IMR-90 (cell line): ENCODE measurements at regions of chr7 and their contacts with region 1.

Region 1: GRCh38 chr7:117323851-117324701 is 1.2 kb upstream of the WNT2 start:
- DNase-seq: peak; percentile 70
- ATAC-seq: peak; percentile 82
- H3K4me3 ChIP-seq: peak overlapping the region; percentile 21
- H3K27ac ChIP-seq: peak overlapping the region; percentile 8; the same call in 1 of the 2 replicates
- H3K4me1 ChIP-seq: peaks cover 7% of the 10 kb centered on the region; the same call in 1 of the 2 replicates
- H3K27me3 ChIP-seq: peaks cover 30% of the 10 kb centered on the region
- CTCF ChIP-seq: no peak
- POLR2A ChIP-seq: no peak
- RAD21 ChIP-seq: no peak

Region 2: GRCh38 chr7:117269886-117270285 is 54.2 kb before region 1 on chr7:
- CTCF ChIA-PET with region 1: no interaction called
- POLR2A ChIA-PET with region 1: no interaction called
- dilution Hi-C with region 1: no loop called
- in situ Hi-C with region 1: no loop called
- intact Hi-C with region 1: loop called (anchors 5 kb)
- DNase-seq: peak; percentile 91
- ATAC-seq: peak; percentile 75
- H3K4me3 ChIP-seq: no peak overlapping the region
- H3K27ac ChIP-seq: peak overlapping the region; percentile 85
- H3K4me1 ChIP-seq: peaks cover 8% of the 10 kb centered on the region
- H3K27me3 ChIP-seq: no peaks in the 10 kb centered on the region
- CTCF ChIP-seq: no peak
- POLR2A ChIP-seq: no peak
- RAD21 ChIP-seq: no peak

Region 3: DNA sequence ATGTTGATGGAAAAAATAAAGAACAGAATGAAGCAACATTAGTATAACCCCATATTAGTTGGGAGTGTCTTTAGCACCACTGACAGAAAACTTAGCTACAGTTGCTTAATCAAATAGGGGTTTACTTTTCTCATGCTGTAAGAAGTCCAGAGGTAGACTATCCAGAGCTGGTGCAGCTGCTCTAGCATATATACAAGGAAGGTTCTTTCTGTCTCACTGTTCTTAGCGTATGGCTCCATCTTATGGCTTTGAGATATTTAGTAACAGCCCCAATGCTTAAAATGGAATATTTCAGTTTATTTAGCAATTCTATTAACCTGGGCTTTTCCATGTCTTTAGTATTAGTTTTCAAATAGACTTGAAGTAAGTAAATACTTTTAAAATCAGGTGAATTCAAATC is 13.9 kb after region 1 on chr7:
- CTCF ChIA-PET with region 1: no interaction called
- POLR2A ChIA-PET with region 1: no interaction called
- dilution Hi-C with region 1: no loop called
- in situ Hi-C with region 1: no loop called
- intact Hi-C with region 1: no loop called
- DNase-seq: peak; percentile 35
- ATAC-seq: no peak
- H3K4me3 ChIP-seq: no peak overlapping the region
- H3K27ac ChIP-seq: no peak overlapping the region
- H3K4me1 ChIP-seq: no peaks in the 10 kb centered on the region
- H3K27me3 ChIP-seq: no peaks in the 10 kb centered on the region
- CTCF ChIP-seq: 0 out of 2 replicates have a peak, but pooled peaks have one; percentile 23
- POLR2A ChIP-seq: no peak
- RAD21 ChIP-seq: peak; percentile 33

Region 4: DNA sequence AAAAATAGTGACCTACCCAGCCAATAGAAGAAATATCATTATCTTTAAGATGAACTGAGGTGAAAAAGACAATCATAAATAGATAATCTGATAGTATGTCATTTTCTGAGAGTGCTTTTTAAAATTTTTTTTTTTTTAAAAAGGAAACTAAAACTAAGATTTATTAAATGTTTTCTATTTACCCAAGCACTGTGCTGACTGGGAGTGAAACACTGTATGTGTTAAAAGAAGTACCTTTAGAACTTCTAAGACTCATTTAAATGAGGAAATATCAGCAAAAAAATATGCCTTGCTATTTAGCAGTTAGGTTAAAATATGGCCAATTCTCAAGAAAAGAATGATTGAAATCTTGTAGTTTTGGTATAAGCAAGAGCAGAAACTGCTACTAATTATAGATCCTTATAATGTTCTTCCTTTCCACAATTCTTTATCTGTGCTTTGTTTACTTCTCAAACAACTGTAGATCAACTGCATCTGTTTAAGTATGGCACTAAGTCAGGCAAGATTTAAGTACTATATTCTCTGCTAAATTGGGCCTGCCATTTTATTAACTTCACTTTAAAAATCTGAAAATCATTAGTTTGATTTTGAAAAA is 38.3 kb after region 1 on chr7:
- CTCF ChIA-PET with region 1: no interaction called
- POLR2A ChIA-PET with region 1: no interaction called
- dilution Hi-C with region 1: no loop called
- in situ Hi-C with region 1: no loop called
- intact Hi-C with region 1: loop called (anchors 5 kb)
- DNase-seq: no peak
- ATAC-seq: no peak
- H3K4me3 ChIP-seq: no peak overlapping the region
- H3K27ac ChIP-seq: no peak overlapping the region
- H3K4me1 ChIP-seq: peaks cover 3% of the 10 kb centered on the region
- H3K27me3 ChIP-seq: no peaks in the 10 kb centered on the region
- CTCF ChIP-seq: no peak
- POLR2A ChIP-seq: no peak
- RAD21 ChIP-seq: no peak